Natural killer cell (primary cell): ENCODE measurements at regions of chr11 and their contacts with region 1.

Region 1: DNA sequence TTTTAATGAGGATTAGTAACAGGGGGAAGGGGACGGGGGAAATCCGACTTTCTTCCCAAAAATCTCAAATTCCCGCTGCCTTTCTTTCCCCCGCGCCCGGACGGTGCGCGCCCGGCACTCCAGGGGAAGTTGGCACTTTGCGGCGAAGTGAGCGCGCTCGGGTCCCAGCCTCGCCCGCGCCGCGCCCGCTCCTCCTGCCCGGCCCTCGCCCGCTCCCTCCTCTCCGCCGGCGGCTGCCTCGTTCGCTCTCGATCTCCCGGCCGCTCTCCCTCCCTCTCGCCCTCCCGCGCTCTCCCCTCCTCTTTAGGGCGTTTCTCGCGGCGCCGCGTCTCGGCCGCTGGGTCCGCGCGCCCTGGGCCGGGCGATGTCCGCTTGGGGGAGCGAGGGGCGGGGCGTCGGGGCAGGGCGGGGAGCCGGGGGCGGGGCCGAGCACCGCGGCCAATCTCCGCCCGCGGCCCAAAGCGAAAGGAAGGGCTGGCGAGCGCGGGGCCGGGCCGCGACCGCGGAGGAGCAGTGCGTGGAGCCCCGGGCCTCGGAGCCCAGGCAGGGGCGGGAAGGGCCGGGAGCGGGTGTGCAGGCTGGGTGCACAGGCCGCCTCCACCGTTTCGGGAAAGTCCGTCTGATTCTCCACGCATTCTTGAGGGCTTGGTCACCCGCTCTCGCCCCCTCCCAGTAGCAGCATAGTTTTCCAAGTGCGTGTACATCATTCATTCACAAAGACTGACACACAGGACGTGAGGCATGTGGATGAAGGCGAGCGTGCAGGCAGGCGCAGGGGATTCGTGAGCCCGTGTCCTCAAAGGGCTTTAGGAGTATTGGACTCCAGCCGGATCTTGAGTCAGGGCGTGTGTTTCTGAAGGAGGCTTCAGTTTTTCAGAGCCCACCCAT is 65.1 kb downstream of the ETS1 start:
- DNase-seq: peak; percentile 87 to 93
- ATAC-seq: peak; percentile 76 to 93 (median 83)
- H3K4me3 ChIP-seq: peak overlapping the region; percentile 93
- H3K4me3 Mint-ChIP-seq: peak overlapping the region; percentile 98
- H3K27ac ChIP-seq: peak overlapping the region; percentile 90
- H3K27ac Mint-ChIP-seq: peak overlapping the region; percentile 98 to 99
- H3K4me1 ChIP-seq: peaks cover 34% of the 10 kb centered on the region
- H3K4me1 Mint-ChIP-seq: peaks cover 62 to 70% of the 10 kb centered on the region in 2 donors
- H3K27me3 ChIP-seq: no peaks in the 10 kb centered on the region
- H3K27me3 Mint-ChIP-seq: no peaks in the 10 kb centered on the region
- CTCF ChIP-seq: no peak

Region 2: GRCh38 chr11:127412722-127413380 is 1109.4 kb before region 1 on chr11:
- intact Hi-C with region 1: no loop called
- DNase-seq: no peak
- ATAC-seq: no peak
- H3K4me3 ChIP-seq: no peak overlapping the region
- H3K4me3 Mint-ChIP-seq: no peak overlapping the region
- H3K27ac ChIP-seq: no peak overlapping the region
- H3K27ac Mint-ChIP-seq: no peak overlapping the region
- H3K4me1 ChIP-seq: no peaks in the 10 kb centered on the region
- H3K4me1 Mint-ChIP-seq: no peaks in the 10 kb centered on the region
- H3K27me3 ChIP-seq: no peaks in the 10 kb centered on the region
- H3K27me3 Mint-ChIP-seq: peaks cover 0 to 2% of the 10 kb centered on the region in 2 donors
- CTCF ChIP-seq: no peak

Region 3: DNA sequence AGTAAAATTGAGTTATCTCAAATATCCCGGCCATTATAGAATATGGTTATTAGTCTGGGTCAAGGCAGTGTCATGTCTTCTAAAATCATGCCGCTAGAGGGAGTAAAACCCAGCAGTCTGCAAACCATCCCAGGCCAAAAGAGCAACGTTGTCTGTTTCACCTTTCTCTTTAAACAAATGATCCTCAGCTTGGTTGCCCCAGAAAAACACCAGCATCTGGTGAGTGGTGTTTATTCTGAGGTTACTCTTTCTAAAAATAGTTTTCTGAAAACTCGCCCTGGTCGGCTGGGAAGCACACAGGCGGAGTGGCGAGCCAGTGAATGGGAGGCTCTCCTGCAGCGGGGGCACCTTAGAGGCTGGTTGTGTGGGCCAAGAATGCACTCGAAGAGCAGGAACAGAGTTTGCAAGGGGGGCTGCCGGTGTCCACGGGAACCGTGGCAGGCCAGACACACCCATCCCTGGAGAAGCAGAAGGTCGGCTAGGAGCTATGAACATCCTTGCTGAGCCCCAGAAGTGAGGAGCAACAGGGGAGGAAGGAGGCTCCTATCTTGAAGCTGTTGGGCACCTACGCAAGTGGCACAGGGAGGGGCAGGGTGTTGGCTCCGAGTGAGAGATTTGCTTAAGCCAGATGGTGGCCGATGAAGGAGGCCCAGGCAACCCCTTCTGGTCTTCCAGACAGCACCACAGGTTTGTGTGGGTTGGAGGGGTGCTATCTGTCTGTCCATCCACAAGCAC is 232.0 kb before region 1 on chr11:
- intact Hi-C with region 1: loop called (anchors 2 kb)
- DNase-seq: peak; percentile 62 to 95
- ATAC-seq: peak; percentile 79 to 90 (median 85)
- H3K4me3 ChIP-seq: peak overlapping the region; percentile 31
- H3K4me3 Mint-ChIP-seq: peak overlapping the region; percentile 94
- H3K27ac ChIP-seq: peak overlapping the region; percentile 97
- H3K27ac Mint-ChIP-seq: peak overlapping the region; percentile 98 to 99
- H3K4me1 ChIP-seq: peaks cover 37% of the 10 kb centered on the region
- H3K4me1 Mint-ChIP-seq: peaks cover 84 to 90% of the 10 kb centered on the region in 2 donors
- H3K27me3 ChIP-seq: no peaks in the 10 kb centered on the region
- H3K27me3 Mint-ChIP-seq: no peaks in the 10 kb centered on the region
- CTCF ChIP-seq: peak; percentile 87

Region 4: DNA sequence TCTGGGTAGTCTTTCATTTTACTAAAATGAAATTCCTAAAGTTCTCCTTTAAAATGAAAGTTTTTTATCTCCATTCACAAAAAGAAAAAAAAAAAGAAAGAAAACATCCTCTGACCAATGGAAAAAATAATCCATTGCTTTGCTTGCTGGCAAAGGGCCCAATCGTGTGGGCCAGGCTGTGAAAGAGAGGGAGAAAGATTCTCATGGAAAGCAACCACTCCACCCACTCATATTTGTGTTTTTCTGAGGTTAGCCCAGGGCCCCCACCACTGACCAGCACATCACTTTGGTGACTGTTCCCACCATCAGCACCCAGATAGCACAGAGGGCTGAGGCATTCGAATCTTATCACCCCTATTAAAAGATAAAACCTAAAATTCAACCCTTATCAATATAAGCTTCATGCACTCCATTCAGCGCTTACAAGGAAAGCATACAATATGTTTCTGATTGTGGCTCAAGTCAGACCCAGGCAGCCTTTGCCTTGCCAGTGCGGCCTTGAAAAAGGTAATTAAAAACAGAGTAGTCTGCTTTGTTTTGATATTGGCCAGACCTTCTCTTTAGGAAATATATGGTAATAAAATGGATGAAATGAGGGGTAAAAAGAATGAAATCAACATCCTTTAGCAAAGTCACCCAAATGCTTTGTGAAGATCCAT is 127.7 kb before region 1 on chr11:
- intact Hi-C with region 1: no loop called
- DNase-seq: no peak
- ATAC-seq: no peak
- H3K4me3 ChIP-seq: no peak overlapping the region
- H3K4me3 Mint-ChIP-seq: no peak overlapping the region
- H3K27ac ChIP-seq: no peak overlapping the region
- H3K27ac Mint-ChIP-seq: no peak overlapping the region
- H3K4me1 ChIP-seq: no peaks in the 10 kb centered on the region
- H3K4me1 Mint-ChIP-seq: peaks cover 6% of the 10 kb centered on the region in 2 donors
- H3K27me3 ChIP-seq: no peaks in the 10 kb centered on the region
- H3K27me3 Mint-ChIP-seq: no peaks in the 10 kb centered on the region
- CTCF ChIP-seq: no peak

Region 5: DNA sequence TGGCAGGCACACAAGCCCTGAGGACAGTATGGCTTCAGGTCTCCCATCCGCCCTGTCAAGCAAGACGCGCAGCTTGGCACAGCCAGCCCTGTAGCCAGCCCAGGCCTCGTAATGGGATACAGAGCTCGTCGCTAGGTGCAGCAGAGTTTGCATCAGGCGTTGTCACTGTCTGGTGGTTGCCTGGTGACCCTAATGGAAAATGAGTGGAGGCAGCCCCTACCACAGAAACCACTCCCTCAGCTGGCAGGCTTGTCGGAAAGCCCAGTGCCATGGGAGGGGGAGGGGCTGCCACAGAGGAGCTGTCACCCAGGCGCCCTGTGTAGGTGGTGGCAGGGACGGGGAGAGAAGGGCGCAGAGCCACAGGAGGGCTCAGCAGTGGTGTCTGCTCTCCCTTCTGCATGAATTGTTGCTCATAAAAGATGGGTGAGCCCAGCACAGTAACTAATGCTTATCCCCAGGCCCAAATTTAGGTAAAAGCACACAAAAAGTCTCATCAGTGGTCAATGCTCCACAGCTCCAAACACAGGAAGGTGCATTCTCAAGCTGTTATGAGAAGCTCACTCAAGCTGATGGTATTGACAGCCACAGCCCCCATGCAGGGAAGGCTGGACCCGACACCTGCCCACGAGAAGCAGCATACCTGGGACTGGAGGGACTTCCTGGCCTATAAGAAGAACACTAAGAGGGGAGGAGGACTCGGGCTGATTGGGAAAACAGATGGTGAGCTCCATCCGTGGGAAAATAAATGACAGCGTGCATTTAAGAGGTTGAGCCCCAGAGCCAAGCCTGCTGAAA is 99.5 kb before region 1 on chr11:
- intact Hi-C with region 1: loop called (anchors 1 kb)
- DNase-seq: peak; percentile 83 to 93
- ATAC-seq: peak; percentile 90 to 94 (median 92)
- H3K4me3 ChIP-seq: no peak overlapping the region
- H3K4me3 Mint-ChIP-seq: peak overlapping the region; percentile 82
- H3K27ac ChIP-seq: peak overlapping the region; percentile 74
- H3K27ac Mint-ChIP-seq: peak overlapping the region; percentile 93 to 97
- H3K4me1 ChIP-seq: peaks cover 30% of the 10 kb centered on the region
- H3K4me1 Mint-ChIP-seq: peaks cover 42 to 47% of the 10 kb centered on the region in 2 donors
- H3K27me3 ChIP-seq: no peaks in the 10 kb centered on the region
- H3K27me3 Mint-ChIP-seq: no peaks in the 10 kb centered on the region
- CTCF ChIP-seq: no peak

Region 6: DNA sequence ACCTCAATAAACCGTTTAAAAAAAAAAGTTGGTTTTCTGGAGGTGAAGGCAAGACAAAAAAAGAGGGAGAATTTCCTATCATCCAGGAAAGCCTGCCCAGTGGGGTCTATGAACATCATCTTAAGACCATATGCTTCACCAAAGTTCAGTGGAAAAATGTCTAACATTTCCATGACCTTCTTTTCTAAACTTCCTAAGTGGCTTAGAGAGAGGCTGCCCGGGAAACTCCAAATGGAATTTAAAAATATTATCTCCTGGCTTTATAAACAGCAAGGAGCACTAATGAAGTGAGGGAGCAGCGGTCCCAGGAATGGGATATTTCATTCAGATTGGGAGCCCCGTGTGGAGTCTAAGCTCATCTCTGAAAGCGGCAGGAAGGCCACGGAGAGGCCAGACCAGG is 18.2 kb after region 1 on chr11:
- intact Hi-C with region 1: no loop called
- DNase-seq: no peak
- ATAC-seq: no peak
- H3K4me3 ChIP-seq: no peak overlapping the region
- H3K4me3 Mint-ChIP-seq: no peak overlapping the region
- H3K27ac ChIP-seq: no peak overlapping the region
- H3K27ac Mint-ChIP-seq: no peak overlapping the region
- H3K4me1 ChIP-seq: peaks cover 3% of the 10 kb centered on the region
- H3K4me1 Mint-ChIP-seq: peaks cover 6 to 11% of the 10 kb centered on the region in 2 donors
- H3K27me3 ChIP-seq: no peaks in the 10 kb centered on the region
- H3K27me3 Mint-ChIP-seq: peaks cover 29 to 30% of the 10 kb centered on the region in 2 donors
- CTCF ChIP-seq: no peak

Region 7: DNA sequence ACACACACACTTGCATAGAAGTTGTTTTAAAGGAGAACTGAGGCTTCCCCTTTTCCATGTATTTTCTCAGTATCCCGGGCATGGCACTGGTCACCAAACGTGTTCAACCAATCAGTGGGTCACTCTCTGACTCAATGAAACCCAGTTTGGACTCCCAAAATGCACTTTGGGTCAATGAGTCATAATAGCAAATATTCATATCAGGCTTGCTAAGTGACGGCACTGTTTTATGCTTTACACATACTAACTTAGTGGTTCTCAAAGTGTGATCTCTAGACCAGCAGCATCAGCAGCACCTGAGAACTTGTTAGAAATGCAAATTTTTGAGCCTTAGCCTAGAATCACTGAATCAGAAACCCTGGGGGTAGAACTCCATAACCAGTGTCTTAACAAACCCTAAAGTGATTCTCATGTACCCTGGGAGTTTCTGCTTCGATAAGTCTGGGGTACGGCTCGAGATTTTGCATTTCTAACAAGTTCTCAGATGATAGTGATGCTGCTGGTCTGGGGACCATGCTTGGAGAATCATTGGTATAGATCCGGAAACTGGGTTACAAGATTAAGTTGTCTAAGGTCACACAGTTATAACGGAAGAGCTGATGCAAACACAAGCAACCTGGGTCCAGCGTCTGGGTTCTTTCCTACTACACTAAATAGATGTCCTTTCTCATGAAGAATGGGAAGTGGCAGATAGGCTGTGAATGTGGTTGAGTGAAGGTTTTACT is 29.5 kb after region 1 on chr11:
- intact Hi-C with region 1: loop called (anchors 1 kb)
- DNase-seq: peak; percentile 27 to 72
- ATAC-seq: peak; percentile 89 to 90 (median 89)
- H3K4me3 ChIP-seq: no peak overlapping the region
- H3K4me3 Mint-ChIP-seq: peak overlapping the region; percentile 55
- H3K27ac ChIP-seq: peak overlapping the region; percentile 87
- H3K27ac Mint-ChIP-seq: peak overlapping the region; percentile 97
- H3K4me1 ChIP-seq: peaks cover 53% of the 10 kb centered on the region
- H3K4me1 Mint-ChIP-seq: peaks cover 57 to 61% of the 10 kb centered on the region in 2 donors
- H3K27me3 ChIP-seq: no peaks in the 10 kb centered on the region
- H3K27me3 Mint-ChIP-seq: no peaks in the 10 kb centered on the region
- CTCF ChIP-seq: no peak

Region 8: GRCh38 chr11:128695539-128696221 is 173.4 kb after region 1 on chr11:
- intact Hi-C with region 1: loop called (anchors 10 kb)
- DNase-seq: peak in 1 of 2 donors; percentile 73
- ATAC-seq: peak; percentile 32 to 75 (median 46)
- H3K4me3 ChIP-seq: peak overlapping the region; percentile 89
- H3K4me3 Mint-ChIP-seq: peak overlapping the region; percentile 98
- H3K27ac ChIP-seq: peak overlapping the region; percentile 86
- H3K27ac Mint-ChIP-seq: peak overlapping the region; percentile 89 to 99
- H3K4me1 ChIP-seq: peaks cover 59% of the 10 kb centered on the region
- H3K4me1 Mint-ChIP-seq: peaks cover 68 to 79% of the 10 kb centered on the region in 2 donors
- H3K27me3 ChIP-seq: no peaks in the 10 kb centered on the region
- H3K27me3 Mint-ChIP-seq: peaks cover 0 to 8% of the 10 kb centered on the region in 2 donors
- CTCF ChIP-seq: no peak